ENCODE measurements at regions of chr6 and their contacts with region 1.

Region 1: DNA sequence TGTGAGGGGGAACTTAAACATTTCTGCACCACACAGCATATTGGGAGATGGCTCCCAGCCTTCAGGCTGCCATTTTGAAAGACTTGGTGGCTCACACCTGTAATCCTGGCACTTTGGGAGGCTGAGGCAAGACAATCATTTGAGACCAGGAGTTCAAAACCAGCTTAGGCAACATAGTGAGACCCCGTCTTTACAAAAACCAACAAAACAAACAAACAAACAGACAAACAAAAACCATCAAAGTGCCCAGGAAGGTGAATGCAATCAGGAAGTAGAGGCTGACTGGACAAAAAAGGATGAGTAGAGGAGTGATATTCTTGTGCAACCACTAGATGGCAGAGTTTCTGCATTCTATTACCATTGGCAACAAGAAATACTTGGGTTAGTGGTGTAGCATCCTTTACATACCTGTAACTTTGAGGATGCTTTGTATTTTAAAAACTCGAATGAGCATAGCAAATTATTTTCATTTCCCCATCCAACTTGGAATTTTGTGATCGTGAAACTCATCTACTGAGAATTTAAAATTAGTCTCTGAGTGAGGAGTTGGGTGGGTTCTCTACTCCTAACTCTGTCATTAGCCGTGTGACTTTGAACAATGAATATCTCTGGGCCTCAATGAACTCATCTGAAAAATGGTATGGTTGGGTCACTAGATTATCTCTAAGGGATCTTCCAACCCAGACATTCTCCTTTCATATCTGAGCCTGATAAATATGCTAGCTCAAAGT is 84.4 kb downstream of the CRYBG1 start:
- DNase-seq: no peak
- ATAC-seq: peak; percentile 43
- H3K4me3 Mint-ChIP-seq: no peak overlapping the region
- H3K27ac Mint-ChIP-seq: no peak overlapping the region
- H3K4me1 Mint-ChIP-seq: peaks cover 16% of the 10 kb centered on the region
- H3K27me3 Mint-ChIP-seq: peaks cover 18% of the 10 kb centered on the region
- CTCF ChIP-seq: peak; percentile 25

Region 2: DNA sequence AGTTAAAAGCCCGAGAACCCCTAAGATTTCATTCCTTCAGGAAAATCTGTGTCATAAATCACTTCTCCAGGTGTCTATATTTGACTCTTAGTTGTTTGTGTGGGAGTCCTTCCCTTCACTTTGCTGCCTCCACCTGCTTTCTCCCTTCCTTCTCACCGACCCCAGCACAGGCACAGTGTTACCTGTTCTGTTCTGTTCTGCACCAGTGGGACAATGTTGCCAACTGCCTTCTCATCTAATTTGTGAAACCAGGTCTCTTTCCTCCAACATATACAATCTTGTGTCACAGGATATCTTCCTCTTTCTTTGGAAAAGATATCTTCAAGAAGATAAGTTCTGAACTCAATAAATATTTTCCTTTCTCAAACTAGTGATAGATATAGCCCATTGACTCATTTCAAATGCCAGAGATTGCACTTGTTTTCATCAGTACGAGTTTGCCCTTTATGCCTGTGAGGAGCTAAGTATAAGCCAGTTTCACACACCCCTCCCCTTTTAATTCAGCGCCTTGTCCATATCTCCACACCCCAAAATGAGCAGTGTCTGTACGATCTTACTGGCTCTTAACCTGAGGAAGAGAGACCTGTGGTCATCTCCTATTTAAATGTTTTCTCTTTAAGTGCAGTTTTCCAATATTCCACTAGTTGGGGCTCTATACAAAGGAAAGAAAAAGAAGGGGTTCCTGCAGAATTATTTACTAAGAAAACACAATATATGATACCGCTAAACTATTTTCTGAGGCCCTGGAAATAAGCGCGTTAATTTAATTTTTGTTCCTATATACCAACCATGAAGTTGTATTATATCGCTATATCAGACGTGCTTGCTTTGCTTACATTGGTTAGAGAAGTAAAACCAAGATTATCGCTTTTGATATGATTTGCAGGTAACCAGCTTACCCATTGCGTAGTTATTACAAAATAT is 960.4 kb before region 1 on chr6:
- CTCF ChIA-PET with region 1: no interaction called
- POLR2A ChIA-PET with region 1: no interaction called
- intact Hi-C with region 1: loop called (anchors 2 kb)
- DNase-seq: no peak
- ATAC-seq: no peak
- H3K4me3 Mint-ChIP-seq: no peak overlapping the region
- H3K27ac Mint-ChIP-seq: no peak overlapping the region
- H3K4me1 Mint-ChIP-seq: peaks cover 2% of the 10 kb centered on the region
- H3K27me3 Mint-ChIP-seq: peaks cover 6% of the 10 kb centered on the region
- CTCF ChIP-seq: no peak

Region 3: DNA sequence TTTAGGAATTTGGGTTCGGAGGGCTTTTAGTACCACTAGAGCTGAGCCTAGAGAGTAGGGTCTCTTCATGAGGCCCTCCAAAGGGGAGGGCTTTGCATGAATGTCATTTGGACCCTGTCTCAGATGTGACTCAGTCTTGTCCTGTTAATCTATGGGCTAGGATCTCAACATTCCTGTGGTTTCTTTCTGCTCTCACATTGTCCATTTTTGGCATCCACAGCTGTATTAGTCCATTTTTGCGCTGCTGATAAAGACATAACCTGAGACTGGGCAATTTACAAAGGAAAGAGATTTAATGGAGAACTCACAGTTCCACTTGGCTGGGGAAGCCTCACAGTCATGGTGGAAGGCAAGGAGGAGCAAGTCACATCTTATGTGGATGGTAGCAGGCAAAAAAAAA is 23.4 kb before region 1 on chr6:
- CTCF ChIA-PET with region 1: no interaction called
- POLR2A ChIA-PET with region 1: no interaction called
- intact Hi-C with region 1: no loop called
- DNase-seq: no peak
- ATAC-seq: no peak
- H3K4me3 Mint-ChIP-seq: no peak overlapping the region
- H3K27ac Mint-ChIP-seq: no peak overlapping the region
- H3K4me1 Mint-ChIP-seq: no peaks in the 10 kb centered on the region
- H3K27me3 Mint-ChIP-seq: peaks cover 21% of the 10 kb centered on the region
- CTCF ChIP-seq: no peak

Region 4: GRCh38 chr6:106519460-106520394 is 74.8 kb after region 1 on chr6:
- CTCF ChIA-PET with region 1: interaction called, 4 read pairs
- POLR2A ChIA-PET with region 1: interaction called, 10 read pairs
- intact Hi-C with region 1: loop called (anchors 2 kb)
- DNase-seq: peak; percentile 43
- ATAC-seq: peak; percentile 68
- H3K4me3 Mint-ChIP-seq: peak overlapping the region; percentile 86
- H3K27ac Mint-ChIP-seq: peak overlapping the region; percentile 97
- H3K4me1 Mint-ChIP-seq: peaks cover 85% of the 10 kb centered on the region
- H3K27me3 Mint-ChIP-seq: no peaks in the 10 kb centered on the region
- CTCF ChIP-seq: no peak

Region 5: GRCh38 chr6:106568530-106568929 is 123.6 kb after region 1 on chr6:
- CTCF ChIA-PET with region 1: interaction called, 148 read pairs
- POLR2A ChIA-PET with region 1: interaction called, 10 read pairs
- intact Hi-C with region 1: loop called (anchors 1 kb)
- DNase-seq: no peak
- ATAC-seq: no peak
- H3K4me3 Mint-ChIP-seq: no peak overlapping the region
- H3K27ac Mint-ChIP-seq: peak overlapping the region; percentile 41
- H3K4me1 Mint-ChIP-seq: peaks cover 5% of the 10 kb centered on the region
- H3K27me3 Mint-ChIP-seq: no peaks in the 10 kb centered on the region
- CTCF ChIP-seq: no peak

Region 6: GRCh38 chr6:106591111-106591825 is 146.3 kb after region 1 on chr6:
- CTCF ChIA-PET with region 1: no interaction called
- POLR2A ChIA-PET with region 1: no interaction called
- intact Hi-C with region 1: no loop called
- DNase-seq: no peak
- ATAC-seq: no peak
- H3K4me3 Mint-ChIP-seq: no peak overlapping the region
- H3K27ac Mint-ChIP-seq: no peak overlapping the region
- H3K4me1 Mint-ChIP-seq: peaks cover 4% of the 10 kb centered on the region
- H3K27me3 Mint-ChIP-seq: no peaks in the 10 kb centered on the region
- CTCF ChIP-seq: no peak

Region 7: GRCh38 chr6:106979427-106979884 is 534.5 kb after region 1 on chr6:
- CTCF ChIA-PET with region 1: interaction called, 41 read pairs
- POLR2A ChIA-PET with region 1: interaction called, 5 read pairs
- intact Hi-C with region 1: loop called (anchors 1 kb)
- DNase-seq: peak; percentile 79
- ATAC-seq: peak; percentile 32
- H3K4me3 Mint-ChIP-seq: no peak overlapping the region
- H3K27ac Mint-ChIP-seq: no peak overlapping the region
- H3K4me1 Mint-ChIP-seq: peaks cover 19% of the 10 kb centered on the region
- H3K27me3 Mint-ChIP-seq: no peaks in the 10 kb centered on the region
- CTCF ChIP-seq: peak; percentile 28

Region 8: DNA sequence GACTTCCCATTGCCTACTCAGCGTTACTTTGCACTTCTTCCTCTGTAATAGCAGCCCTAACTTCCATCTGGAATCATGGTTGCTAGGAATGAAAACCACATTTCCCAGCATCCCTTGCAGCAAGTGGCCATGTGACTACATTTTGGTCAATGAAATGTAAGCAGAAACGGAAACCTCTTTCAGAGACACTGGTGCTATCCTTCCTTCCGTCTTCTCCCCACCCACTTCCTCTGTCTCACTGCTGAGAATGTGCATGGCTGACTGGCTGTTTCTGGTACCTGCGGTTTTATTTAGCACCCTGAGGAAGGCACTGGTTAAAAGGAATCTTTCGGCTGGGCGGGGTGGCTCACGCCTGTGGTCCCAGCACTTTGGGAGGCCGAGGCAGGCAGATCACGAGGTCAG is 1271.7 kb after region 1 on chr6:
- CTCF ChIA-PET with region 1: no interaction called
- POLR2A ChIA-PET with region 1: no interaction called
- intact Hi-C with region 1: no loop called
- DNase-seq: no peak
- ATAC-seq: peak; percentile 93
- H3K4me3 Mint-ChIP-seq: peak overlapping the region; percentile 86
- H3K27ac Mint-ChIP-seq: peak overlapping the region; percentile 93
- H3K4me1 Mint-ChIP-seq: peaks cover 28% of the 10 kb centered on the region
- H3K27me3 Mint-ChIP-seq: no peaks in the 10 kb centered on the region
- CTCF ChIP-seq: no peak

Measured in activated B cell treated with CpG ODN at 0.5 μM for 24 hours (primary cell).